ENCODE measurements at regions of chr12 and their contacts with region 1.

Region 1: DNA sequence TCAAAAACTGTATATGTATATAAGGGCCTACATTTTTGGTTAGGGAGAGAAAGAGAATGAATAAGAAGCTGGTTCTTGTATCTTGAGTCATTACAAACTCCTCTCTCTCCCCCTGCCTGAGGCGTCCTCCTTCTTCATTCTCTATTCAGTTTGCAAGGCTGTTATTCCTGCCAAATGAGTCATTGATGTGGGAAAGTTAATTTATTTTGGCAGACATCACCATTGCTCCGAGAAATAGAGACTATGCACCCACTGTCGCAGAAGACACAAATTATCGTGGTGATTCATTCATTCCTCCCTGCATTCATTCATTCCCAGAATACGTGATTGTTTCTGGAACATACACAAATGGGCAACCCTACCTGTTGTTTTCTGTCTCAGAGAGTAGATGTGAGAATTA is 112.5 kb upstream of the MED13L start:
- DNase-seq: peak; percentile 95
- H3K4me3 ChIP-seq: no peak overlapping the region
- CTCF ChIP-seq: no peak

Region 2: GRCh38 chr12:116303929-116304328 is 86.1 kb before region 1 on chr12:
- in situ Hi-C with region 1: no loop called
- DNase-seq: no peak
- H3K4me3 ChIP-seq: no peak overlapping the region
- CTCF ChIP-seq: no peak

Region 3: GRCh38 chr12:116352315-116352835 is 37.6 kb before region 1 on chr12:
- in situ Hi-C with region 1: loop called (anchors 5 kb)
- DNase-seq: no peak
- H3K4me3 ChIP-seq: no peak overlapping the region
- CTCF ChIP-seq: no peak